Mammary epithelial cell (primary cell): ENCODE measurements at regions of chr3 and their contacts with region 1.

Region 1: DNA sequence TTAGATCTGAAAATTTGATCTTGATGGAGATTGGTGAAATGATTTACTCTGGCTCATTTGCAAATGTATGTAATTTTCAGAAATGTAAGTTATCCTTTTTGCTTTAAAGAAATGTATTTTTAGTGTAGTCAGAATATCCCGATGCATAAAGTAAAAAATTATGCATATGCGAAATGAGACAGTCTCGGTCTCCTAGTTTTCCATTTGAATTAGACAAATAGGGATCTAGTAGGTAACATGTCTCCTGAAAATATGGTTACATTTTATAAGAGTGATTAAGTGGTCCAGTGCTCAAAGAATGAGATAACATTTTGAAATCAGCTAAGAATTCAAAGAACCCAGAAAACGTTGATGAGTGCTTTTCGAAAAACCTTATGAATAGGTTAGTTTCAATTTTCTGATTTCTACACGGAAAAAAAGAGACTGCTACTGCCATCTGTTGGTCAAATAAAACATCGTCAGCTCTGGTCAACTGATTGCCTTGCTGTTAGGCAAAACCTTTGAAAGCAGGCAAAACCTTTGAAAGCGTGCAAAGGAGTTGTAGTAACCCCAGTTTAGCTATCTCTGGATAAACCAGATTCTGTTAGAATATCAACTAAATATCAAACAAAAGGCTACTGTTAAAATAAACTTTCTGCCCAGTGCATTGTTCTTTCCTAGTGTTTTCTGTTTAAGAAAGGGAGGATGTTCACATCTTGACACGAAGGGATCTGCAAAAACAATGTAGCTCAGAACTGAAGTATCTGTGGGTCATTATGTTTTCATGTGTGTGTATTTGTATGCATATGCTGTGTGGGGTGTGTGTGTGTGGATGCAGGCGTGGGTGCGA is 59.3 kb upstream of the CHMP2B start:
- DNase-seq: peak; percentile 39
- H3K4me3 ChIP-seq: peak overlapping the region; percentile 28 to 47 (median 46)
- H3K27ac ChIP-seq: no peak overlapping the region
- H3K4me1 ChIP-seq: no peaks in the 10 kb centered on the region
- H3K27me3 ChIP-seq: no peaks in the 10 kb centered on the region
- CTCF ChIP-seq: peak; percentile 68 to 71

Region 2: GRCh38 chr3:86702381-86702958 is 465.4 kb before region 1 on chr3:
- CTCF ChIA-PET with region 1: no interaction called
- dilution Hi-C with region 1: no loop called
- in situ Hi-C with region 1: no loop called
- intact Hi-C with region 1: loop called (anchors 5 kb)
- DNase-seq: no peak
- H3K4me3 ChIP-seq: no peak overlapping the region
- H3K27ac ChIP-seq: no peak overlapping the region
- H3K4me1 ChIP-seq: no peaks in the 10 kb centered on the region
- H3K27me3 ChIP-seq: peaks cover 2% of the 10 kb centered on the region
- CTCF ChIP-seq: peak; percentile 35 to 45

Region 3: DNA sequence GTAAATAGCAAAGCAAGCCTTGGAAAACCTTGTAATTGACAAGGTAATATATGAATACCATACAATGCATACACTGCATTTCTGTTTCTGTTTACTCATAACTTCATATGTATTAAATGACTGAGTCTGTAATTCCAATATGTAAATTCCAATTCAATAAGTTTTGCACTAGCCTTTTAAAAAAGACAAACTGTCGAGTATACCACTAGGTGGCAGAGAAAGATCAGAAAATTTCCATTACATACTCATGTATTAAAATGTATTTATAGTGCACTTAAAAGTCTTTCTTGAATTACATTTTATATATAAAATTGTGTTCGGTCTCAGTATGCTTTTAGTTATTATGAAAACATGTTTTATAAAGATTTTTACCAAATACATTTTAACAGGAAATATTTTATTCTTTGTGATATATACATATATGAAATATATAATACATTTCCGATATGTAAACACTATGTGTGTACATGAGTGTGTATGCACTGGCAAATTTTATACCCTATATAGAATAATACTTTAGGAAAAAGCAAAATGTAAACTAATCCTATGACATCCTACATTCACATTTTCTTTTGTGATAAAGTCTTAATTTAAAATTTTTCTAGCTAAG is 393.7 kb before region 1 on chr3:
- CTCF ChIA-PET with region 1: interaction called, 6 read pairs
- dilution Hi-C with region 1: no loop called
- in situ Hi-C with region 1: no loop called
- intact Hi-C with region 1: loop called (anchors 2 kb)
- DNase-seq: peak; percentile 18
- H3K4me3 ChIP-seq: no peak overlapping the region
- H3K27ac ChIP-seq: no peak overlapping the region
- H3K4me1 ChIP-seq: no peaks in the 10 kb centered on the region
- H3K27me3 ChIP-seq: no peaks in the 10 kb centered on the region
- CTCF ChIP-seq: peak; percentile 32 to 53

Region 4: DNA sequence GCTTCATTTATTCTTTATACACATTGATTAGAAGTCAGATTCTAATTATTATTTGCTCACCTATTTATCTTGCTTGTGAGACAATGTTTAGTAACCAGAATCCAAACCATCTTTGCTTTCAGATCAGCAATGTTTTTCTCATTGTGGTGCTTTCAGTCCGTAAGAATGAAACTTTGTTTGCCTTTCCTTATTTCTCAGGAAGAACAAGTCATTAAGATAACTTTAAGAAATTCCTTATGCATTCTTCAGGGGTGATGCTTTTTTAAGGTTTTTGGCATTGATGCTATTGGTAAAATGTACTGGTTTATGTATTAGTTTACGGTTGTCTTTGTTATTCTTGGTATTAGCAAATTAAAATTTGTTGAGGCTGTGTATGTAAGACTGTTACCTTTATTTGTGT is 229.4 kb after region 1 on chr3:
- CTCF ChIA-PET with region 1: no interaction called
- dilution Hi-C with region 1: no loop called
- in situ Hi-C with region 1: no loop called
- intact Hi-C with region 1: no loop called
- DNase-seq: no peak
- H3K4me3 ChIP-seq: no peak overlapping the region
- H3K27ac ChIP-seq: no peak overlapping the region
- H3K4me1 ChIP-seq: no peaks in the 10 kb centered on the region
- H3K27me3 ChIP-seq: no peaks in the 10 kb centered on the region
- CTCF ChIP-seq: no peak

Region 5: DNA sequence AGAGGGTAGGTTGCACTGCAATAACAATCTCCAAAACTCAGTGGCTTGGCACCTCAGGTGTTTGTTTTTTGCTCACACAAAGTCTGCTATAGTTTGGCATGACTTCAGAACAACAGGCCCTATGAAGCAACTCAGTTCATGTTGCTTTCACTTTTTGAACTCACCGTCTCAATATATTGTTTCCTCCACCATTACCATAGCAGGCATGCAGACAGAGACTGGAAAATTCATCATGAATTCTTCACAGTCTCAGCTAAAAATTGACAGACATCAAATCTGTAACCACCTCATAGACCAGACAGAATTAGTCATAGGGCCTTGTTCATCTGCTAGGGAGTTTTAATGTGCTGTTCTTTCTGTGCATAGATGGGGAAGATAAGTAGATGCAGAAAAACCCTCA is 269.9 kb after region 1 on chr3:
- CTCF ChIA-PET with region 1: no interaction called
- dilution Hi-C with region 1: no loop called
- in situ Hi-C with region 1: no loop called
- intact Hi-C with region 1: no loop called
- DNase-seq: peak; percentile 58
- H3K4me3 ChIP-seq: no peak overlapping the region
- H3K27ac ChIP-seq: no peak overlapping the region
- H3K4me1 ChIP-seq: peaks cover 16% of the 10 kb centered on the region
- H3K27me3 ChIP-seq: no peaks in the 10 kb centered on the region
- CTCF ChIP-seq: no peak

Region 6: DNA sequence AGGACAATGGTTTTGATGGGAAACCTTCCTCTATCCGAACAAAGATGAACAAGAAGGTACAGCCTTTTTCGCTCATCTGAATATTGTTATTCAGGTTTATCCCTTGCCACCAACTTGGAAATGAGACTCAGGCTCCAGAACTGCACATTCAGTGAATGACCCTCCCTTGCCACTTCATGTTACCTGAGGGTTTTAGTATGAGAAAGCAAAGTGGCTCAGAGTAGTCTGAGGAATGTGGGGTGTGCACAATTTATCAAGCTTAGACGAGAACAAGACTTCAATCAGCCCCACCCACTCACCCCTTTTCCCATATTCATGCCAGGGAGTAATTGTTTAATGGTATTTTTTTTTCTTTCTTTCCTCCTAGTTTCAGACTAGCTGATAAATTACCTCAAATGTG is 373.9 kb after region 1 on chr3:
- CTCF ChIA-PET with region 1: no interaction called
- dilution Hi-C with region 1: no loop called
- in situ Hi-C with region 1: no loop called
- intact Hi-C with region 1: no loop called
- DNase-seq: peak; percentile 8
- H3K4me3 ChIP-seq: no peak overlapping the region
- H3K27ac ChIP-seq: no peak overlapping the region
- H3K4me1 ChIP-seq: peaks cover 15% of the 10 kb centered on the region
- H3K27me3 ChIP-seq: no peaks in the 10 kb centered on the region
- CTCF ChIP-seq: no peak